ENCODE measurements at regions of chr7 and their contacts with region 1.

Region 1: DNA sequence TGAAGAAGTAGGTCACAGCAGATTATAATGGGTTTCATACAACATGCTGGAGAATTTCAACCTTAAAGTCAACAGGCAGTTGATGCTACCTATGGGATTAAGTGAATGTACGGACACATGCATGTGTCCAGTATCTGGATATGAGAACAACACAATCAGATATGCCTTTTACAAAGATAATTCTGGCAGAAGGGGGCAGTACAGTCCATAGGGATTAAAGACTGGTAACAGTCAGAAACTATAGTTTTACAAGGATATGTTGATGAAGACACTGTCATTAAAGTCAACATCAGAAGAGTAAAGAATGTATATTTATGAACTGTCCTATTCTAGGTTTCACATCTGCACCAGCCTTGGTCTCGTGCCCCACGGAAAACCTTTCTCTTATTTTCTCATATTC is 41.5 kb downstream of the ANKMY2 start:
- DNase-seq: no peak
- ATAC-seq: no peak
- H3K4me3 ChIP-seq: no peak overlapping the region
- H3K27ac ChIP-seq: no peak overlapping the region
- H3K4me1 ChIP-seq: no peaks in the 10 kb centered on the region
- H3K27me3 ChIP-seq: no peaks in the 10 kb centered on the region

Region 2: DNA sequence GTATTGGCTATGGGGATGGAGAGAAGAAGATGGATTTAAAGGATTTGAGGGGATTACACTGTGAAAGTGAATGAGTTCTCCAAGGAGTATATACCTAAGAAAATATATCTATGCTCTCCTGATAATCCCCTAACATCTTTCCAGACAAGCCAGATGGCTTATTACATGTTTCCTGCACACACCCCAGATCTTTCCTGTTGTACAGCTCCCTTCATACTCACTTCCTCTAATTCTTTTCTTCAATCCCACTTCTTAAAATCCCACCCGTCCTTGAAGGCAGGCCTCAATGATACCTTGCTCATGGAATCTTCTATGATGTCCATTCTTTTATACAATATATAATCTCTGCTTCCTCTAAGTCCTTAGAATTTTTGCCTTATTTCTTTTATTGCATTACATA is 1384.3 kb before region 1 on chr7:
- intact Hi-C with region 1: no loop called
- DNase-seq: no peak
- ATAC-seq: no peak
- H3K4me3 ChIP-seq: no peak overlapping the region
- H3K27ac ChIP-seq: no peak overlapping the region
- H3K4me1 ChIP-seq: no peaks in the 10 kb centered on the region
- H3K27me3 ChIP-seq: no peaks in the 10 kb centered on the region

Region 3: GRCh38 chr7:16671741-16672140 is 67.7 kb after region 1 on chr7:
- intact Hi-C with region 1: no loop called
- DNase-seq: no peak
- ATAC-seq: no peak
- H3K4me3 ChIP-seq: no peak overlapping the region
- H3K27ac ChIP-seq: no peak overlapping the region
- H3K4me1 ChIP-seq: peaks cover 10% of the 10 kb centered on the region
- H3K27me3 ChIP-seq: no peaks in the 10 kb centered on the region

Region 4: DNA sequence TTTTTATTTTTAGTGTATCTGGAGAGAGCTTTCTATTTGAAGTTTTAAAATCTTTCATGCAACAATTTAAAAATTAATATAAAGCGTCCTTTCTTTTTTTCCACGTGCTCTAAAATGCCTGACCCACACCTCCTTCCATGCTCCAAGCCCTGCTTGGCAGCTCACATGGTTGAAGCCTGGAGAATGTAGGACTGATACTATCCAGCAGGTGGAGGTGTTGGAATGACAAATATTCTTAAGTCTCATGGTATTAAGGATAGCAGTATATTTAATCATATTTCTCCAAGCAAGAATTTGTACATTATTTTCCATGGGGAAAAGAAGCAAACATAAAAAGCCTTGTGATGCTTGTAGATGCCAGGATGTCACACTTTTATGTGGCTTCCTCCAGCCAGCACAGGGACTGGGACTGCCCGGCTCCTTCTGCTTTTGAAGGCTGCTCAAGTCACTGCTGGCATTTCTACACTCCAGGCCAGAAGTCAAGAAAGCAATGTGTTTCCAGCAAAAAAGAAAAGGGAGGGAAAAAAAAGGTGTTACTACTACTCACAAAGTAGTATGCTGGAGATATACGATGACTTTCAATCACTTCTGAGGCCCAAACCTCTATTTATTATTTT is 91.7 kb after region 1 on chr7:
- intact Hi-C with region 1: loop called in 1 of 4 experiments (anchors 10 kb)
- DNase-seq: no peak
- ATAC-seq: peak; percentile 64 to 79
- H3K4me3 ChIP-seq: no peak overlapping the region
- H3K27ac ChIP-seq: no peak overlapping the region
- H3K4me1 ChIP-seq: no peaks in the 10 kb centered on the region
- H3K27me3 ChIP-seq: no peaks in the 10 kb centered on the region

Measured in right cardiac atrium (tissue), 5 donors.